Activated CD4-positive, alpha-beta T cell treated with anti-CD3 and anti-CD28 coated beads, Interleukin-2, amount 10 ng/mL, durations not matched to agents 24 days and 14 days (primary cell): ENCODE measurements at regions of chr9 and their contacts with region 1.

Region 1: DNA sequence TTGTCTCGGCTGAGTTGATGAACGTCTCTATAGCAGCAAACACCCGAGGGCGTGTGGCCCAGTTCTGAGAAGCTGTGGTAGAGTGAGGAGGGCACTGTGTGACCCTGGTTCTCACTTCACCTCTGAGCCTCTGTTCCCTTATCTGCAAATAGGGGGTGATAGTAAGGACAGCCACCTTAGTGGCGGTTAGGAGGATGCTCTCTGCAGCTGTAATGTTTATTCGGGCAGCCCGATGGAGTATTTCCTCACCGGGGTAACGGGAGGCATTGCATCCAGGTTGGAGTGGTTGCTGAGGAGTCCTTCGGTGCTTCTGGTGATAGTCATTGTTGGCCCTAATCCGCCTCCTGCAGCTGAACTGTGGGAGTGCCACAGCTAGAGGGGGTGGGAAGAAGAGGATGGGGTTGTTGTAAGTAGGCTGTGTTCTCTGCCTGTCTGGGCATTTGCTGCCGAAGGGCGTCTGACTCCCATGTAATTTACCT is 13.9 kb downstream of the PRRC2B start:
- DNase-seq: peak; percentile 81
- H3K4me3 Mint-ChIP-seq: peak overlapping the region; percentile 82
- H3K27ac Mint-ChIP-seq: peak overlapping the region; percentile 83
- H3K4me1 Mint-ChIP-seq: peaks cover 73% of the 10 kb centered on the region
- H3K27me3 Mint-ChIP-seq: no peaks in the 10 kb centered on the region

Region 2: GRCh38 chr9:131197160-131197911 is 210.4 kb before region 1 on chr9:
- intact Hi-C with region 1: no loop called
- DNase-seq: no peak
- H3K4me3 Mint-ChIP-seq: no peak overlapping the region
- H3K27ac Mint-ChIP-seq: no peak overlapping the region
- H3K4me1 Mint-ChIP-seq: no peaks in the 10 kb centered on the region
- H3K27me3 Mint-ChIP-seq: no peaks in the 10 kb centered on the region

Region 3: DNA sequence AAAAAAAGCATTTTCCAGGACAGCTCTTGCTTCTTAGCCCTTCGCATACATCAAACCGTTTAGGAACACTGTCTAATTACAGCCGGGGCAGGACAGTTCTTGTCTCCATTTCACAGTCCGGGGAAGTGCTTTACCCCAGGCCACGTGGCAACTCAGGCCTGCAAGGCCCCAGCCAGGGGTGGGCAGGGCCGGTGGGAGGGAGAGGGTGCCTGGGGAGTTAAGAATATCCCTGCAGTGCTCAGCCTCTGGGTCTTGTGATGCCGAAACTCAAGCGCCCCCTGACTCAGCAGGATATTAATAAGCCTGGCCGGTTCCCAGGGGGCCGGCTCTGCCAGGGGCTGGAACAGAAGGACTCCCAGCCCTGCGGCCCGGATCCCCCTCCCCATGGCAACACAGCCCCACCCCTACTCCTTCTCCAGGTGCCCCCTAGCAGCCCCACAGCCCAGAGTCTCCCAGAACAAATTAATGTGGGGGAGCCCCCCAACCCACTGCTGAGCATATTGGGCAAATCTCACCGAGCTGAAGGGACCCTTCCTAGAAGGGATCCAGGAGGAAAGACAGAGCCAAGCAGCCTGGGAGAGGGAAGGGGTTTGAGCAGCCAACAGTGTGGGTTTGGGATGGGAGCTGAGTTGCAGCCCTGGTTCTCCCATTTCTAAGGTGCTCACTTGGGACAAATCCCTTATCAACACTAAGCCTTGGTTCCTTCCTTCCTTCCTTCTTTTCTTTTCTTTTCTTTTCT is 73.0 kb before region 1 on chr9:
- intact Hi-C with region 1: no loop called
- DNase-seq: no peak
- H3K4me3 Mint-ChIP-seq: no peak overlapping the region
- H3K27ac Mint-ChIP-seq: no peak overlapping the region
- H3K4me1 Mint-ChIP-seq: peaks cover 6% of the 10 kb centered on the region
- H3K27me3 Mint-ChIP-seq: peaks cover 1% of the 10 kb centered on the region

Region 4: DNA sequence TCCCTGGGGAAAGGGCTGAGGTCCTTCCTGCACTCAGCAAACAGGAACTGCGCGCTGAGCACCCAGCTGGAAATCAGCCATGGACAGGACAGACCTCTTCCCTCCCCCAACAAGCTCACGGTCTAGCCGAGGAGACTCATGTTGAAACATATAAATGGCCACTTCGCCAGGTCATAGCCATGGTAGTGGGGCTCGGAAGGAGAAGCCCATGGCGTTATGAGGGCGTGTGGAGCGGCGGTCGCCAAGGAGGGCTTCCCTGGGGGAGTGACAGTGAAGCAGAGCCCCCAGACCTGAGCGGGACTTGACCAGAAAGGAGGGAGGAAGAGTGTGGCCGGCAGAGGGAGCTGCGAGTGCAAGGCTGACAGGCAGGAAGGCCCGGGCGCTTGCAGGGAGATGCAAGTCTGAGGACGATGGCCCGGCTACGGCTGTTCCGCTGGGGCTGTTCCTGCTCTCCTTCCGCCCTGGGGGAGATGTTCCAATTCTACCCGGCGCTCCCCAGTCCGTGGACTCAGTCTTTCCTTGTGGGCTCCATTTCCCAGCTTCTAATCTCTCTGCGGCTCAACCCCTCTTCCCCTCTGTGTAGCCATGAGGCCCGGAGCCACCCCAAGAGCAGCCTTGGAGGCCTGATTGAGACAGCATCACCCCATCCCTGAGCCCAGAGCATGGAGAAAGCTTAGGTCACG is 57.7 kb before region 1 on chr9:
- intact Hi-C with region 1: loop called (anchors 5 kb)
- DNase-seq: peak; percentile 96
- H3K4me3 Mint-ChIP-seq: peak overlapping the region; percentile 66
- H3K27ac Mint-ChIP-seq: no peak overlapping the region
- H3K4me1 Mint-ChIP-seq: peaks cover 10% of the 10 kb centered on the region
- H3K27me3 Mint-ChIP-seq: no peaks in the 10 kb centered on the region

Region 5: GRCh38 chr9:131366761-131367401 is 40.9 kb before region 1 on chr9:
- intact Hi-C with region 1: loop called (anchors 5 kb)
- DNase-seq: no peak
- H3K4me3 Mint-ChIP-seq: no peak overlapping the region
- H3K27ac Mint-ChIP-seq: no peak overlapping the region
- H3K4me1 Mint-ChIP-seq: peaks cover 4% of the 10 kb centered on the region
- H3K27me3 Mint-ChIP-seq: peaks cover 3% of the 10 kb centered on the region

Region 6: GRCh38 chr9:131393622-131394463 is 13.9 kb before region 1 on chr9 and contains the start of gene PRRC2B:
- intact Hi-C with region 1: loop called (anchors 1 kb)
- DNase-seq: peak; percentile 95
- H3K4me3 Mint-ChIP-seq: peak within 1 kb of the TSS; percentile 91
- H3K27ac Mint-ChIP-seq: peak within 1 kb of the TSS; percentile 94
- H3K4me1 Mint-ChIP-seq: peaks cover 39% of the 10 kb centered on the region
- H3K27me3 Mint-ChIP-seq: peaks cover 5% of the 10 kb centered on the region
- total RNA-seq, gene PRRC2B: 114 and 128 TPM in 2 replicates

Region 7: GRCh38 chr9:131418143-131419028 is 10.6 kb after region 1 on chr9:
- intact Hi-C with region 1: loop called (anchors 1 kb)
- DNase-seq: no peak
- H3K4me3 Mint-ChIP-seq: peak overlapping the region; percentile 86
- H3K27ac Mint-ChIP-seq: peak overlapping the region; percentile 96
- H3K4me1 Mint-ChIP-seq: peaks cover 66% of the 10 kb centered on the region
- H3K27me3 Mint-ChIP-seq: no peaks in the 10 kb centered on the region

Region 8: GRCh38 chr9:131432597-131433306 is 25.0 kb after region 1 on chr9:
- intact Hi-C with region 1: no loop called
- DNase-seq: no peak
- H3K4me3 Mint-ChIP-seq: no peak overlapping the region
- H3K27ac Mint-ChIP-seq: peak overlapping the region; percentile 64
- H3K4me1 Mint-ChIP-seq: peaks cover 15% of the 10 kb centered on the region
- H3K27me3 Mint-ChIP-seq: no peaks in the 10 kb centered on the region

Region 9: DNA sequence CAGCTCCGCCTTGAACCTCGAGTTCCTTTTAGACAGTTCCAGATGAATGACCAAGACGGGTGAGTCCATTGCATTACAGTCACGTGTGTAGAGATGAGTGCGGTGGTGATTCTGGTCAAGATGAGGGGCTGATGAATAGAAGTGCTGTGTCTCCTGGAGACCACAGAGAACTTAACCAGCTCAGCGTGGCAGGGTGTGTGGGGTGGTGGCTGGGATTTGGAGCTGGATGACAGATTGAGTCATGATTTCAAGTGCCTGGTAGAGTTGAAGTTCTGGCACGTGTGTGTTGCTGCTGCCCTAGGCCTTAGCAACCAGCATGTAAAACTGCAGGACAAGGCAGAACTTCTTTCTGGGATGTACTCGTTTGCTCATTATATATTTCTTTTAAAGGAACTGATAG is 39.4 kb after region 1 on chr9:
- intact Hi-C with region 1: loop called (anchors 5 kb)
- DNase-seq: no peak
- H3K4me3 Mint-ChIP-seq: no peak overlapping the region
- H3K27ac Mint-ChIP-seq: peak overlapping the region; percentile 31
- H3K4me1 Mint-ChIP-seq: peaks cover 18% of the 10 kb centered on the region
- H3K27me3 Mint-ChIP-seq: no peaks in the 10 kb centered on the region

Region 10: DNA sequence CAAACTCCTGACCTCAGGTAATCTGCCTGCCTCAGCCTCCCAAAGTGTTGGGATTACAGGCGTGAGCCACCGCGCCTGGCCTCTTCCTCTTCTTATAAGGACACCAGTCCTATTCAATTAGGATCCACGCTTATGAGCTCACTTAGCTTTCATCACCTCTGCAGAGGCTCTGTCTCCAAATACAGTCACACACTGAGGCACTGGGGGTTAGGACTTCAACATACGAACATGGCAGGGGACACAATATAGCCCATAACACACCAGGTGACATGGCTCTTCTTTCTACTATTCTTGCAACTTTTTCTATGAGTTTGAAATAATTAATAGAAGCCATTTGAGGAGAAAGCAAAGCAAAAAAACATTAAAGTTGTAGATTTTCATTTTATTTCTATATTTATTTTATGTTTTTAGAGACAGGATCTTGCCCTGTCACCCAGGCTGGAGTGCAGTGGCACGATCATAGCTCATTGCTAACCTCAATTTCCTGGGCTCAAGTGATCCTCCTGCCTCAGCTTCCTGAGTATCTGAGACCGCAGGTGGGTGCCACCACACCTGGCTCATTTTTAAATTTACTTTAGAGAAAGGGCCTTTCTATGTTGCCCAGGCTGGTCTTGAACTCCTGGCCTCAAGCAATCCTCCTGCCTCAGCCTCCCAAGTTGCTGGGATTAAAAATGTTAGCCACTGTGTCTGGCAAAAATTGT is 131.6 kb after region 1 on chr9:
- intact Hi-C with region 1: no loop called
- DNase-seq: no peak
- H3K4me3 Mint-ChIP-seq: no peak overlapping the region
- H3K27ac Mint-ChIP-seq: no peak overlapping the region
- H3K4me1 Mint-ChIP-seq: peaks cover 14% of the 10 kb centered on the region
- H3K27me3 Mint-ChIP-seq: peaks cover 11% of the 10 kb centered on the region

Region 11: GRCh38 chr9:131645078-131645776 is 237.5 kb after region 1 on chr9:
- intact Hi-C with region 1: loop called (anchors 10 kb)
- DNase-seq: no peak
- H3K4me3 Mint-ChIP-seq: peak overlapping the region; percentile 47
- H3K27ac Mint-ChIP-seq: peak overlapping the region; percentile 100
- H3K4me1 Mint-ChIP-seq: peaks cover 51% of the 10 kb centered on the region
- H3K27me3 Mint-ChIP-seq: no peaks in the 10 kb centered on the region